K562 (cell line): ENCODE measurements at regions of chr5 and their contacts with region 1.

Region 1: GRCh38 chr5:179907570-179908324 is at the start of gene TBC1D9B:
- DNase-seq: peak; percentile 80 to 91 (median 87)
- ATAC-seq: peak; percentile 93
- H3K4me3 ChIP-seq: peak within 1 kb of the TSS; percentile 61
- H3K27ac ChIP-seq: peak within 1 kb of the TSS; percentile 66; the same call in 1 of the 3 replicates
- H3K4me1 ChIP-seq: peaks cover 6 to 35% of the 10 kb centered on the region in 2 experiments; a peak in 4 of 5 replicates
- H3K27me3 ChIP-seq: no peaks in the 10 kb centered on the region
- CTCF ChIP-seq: peak; percentile 32 to 55 (median 50); a peak in 4 of 6 replicates
- EP300 ChIP-seq: no peak
- POLR2A ChIP-seq: no peak; the same call in 1 of the 2 replicates
- RAD21 ChIP-seq: peak in 1 of 2 experiments; percentile 44; a peak in 3 of 4 replicates
- polyA plus RNA-seq, gene TBC1D9B: 2.9 to 4.2 TPM

Region 2: DNA sequence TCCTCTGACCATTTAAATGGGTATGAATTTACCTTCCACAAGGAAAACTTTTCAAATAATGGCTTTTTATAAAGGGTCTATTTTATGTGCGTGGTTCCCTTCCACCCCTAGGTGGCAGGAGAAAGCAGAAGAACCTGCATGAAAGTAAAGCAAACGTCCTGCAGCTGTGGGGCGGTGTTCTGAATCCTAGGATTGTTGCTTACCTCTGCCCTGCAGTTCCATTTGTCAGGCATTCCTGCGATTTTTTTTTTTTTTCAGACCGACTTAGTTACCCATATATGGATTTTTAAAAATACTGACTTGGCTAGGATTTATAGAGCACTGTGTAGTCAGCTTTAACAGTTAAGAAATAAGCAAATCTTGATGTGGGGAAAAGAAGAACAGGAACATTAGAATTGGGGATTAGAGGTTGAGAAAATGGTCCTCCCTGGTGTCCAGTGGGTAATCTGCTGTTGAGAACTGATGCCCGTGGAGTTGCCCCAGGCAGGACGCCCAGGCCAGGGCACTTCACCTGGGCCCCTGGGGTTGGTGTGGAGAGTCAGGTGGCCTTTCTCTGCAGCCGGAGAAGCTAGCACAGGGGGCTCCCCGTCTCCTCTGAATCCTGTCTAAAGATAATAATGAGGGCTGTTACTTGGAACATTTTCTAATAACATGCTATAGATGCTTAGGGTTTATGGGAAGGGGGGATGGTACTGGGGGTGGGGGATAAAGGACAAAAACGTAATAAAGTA is 144.4 kb before region 1 on chr5:
- CTCF ChIA-PET with region 1: no interaction called
- POLR2A ChIA-PET with region 1: no interaction called
- in situ Hi-C with region 1: no loop called
- intact Hi-C with region 1: loop called (anchors 1 kb)
- DNase-seq: peak; percentile 75 to 84 (median 79)
- ATAC-seq: peak; percentile 82
- H3K4me3 ChIP-seq: no peak overlapping the region
- H3K27ac ChIP-seq: no peak overlapping the region
- H3K4me1 ChIP-seq: peaks cover 27 to 52% of the 10 kb centered on the region in 2 experiments
- H3K27me3 ChIP-seq: no peaks in the 10 kb centered on the region
- CTCF ChIP-seq: peak; percentile 87 to 99 (median 98)
- EP300 ChIP-seq: no peak
- POLR2A ChIP-seq: no peak
- RAD21 ChIP-seq: peak; percentile 73 to 79

Region 3: GRCh38 chr5:179806250-179807222 is 101.2 kb before region 1 on chr5 and contains the start of gene MGAT4B:
- CTCF ChIA-PET with region 1: no interaction called
- POLR2A ChIA-PET with region 1: interaction called, 3 read pairs
- in situ Hi-C with region 1: no loop called
- intact Hi-C with region 1: loop called (anchors 5 kb)
- DNase-seq: peak; percentile 80 to 91 (median 84)
- ATAC-seq: peak; percentile 82
- H3K4me3 ChIP-seq: peak within 1 kb of the TSS; percentile 76
- H3K27ac ChIP-seq: peak within 1 kb of the TSS; percentile 88
- H3K4me1 ChIP-seq: peaks cover 23 to 61% of the 10 kb centered on the region in 2 experiments
- H3K27me3 ChIP-seq: no peaks in the 10 kb centered on the region
- CTCF ChIP-seq: no peak
- EP300 ChIP-seq: no peak
- POLR2A ChIP-seq: no peak
- RAD21 ChIP-seq: no peak
- polyA plus RNA-seq, gene MGAT4B: 0.34 to 0.37 TPM